ENCODE measurements at regions of chr9 and their contacts with region 1.

Region 1: GRCh38 chr9:116646661-116647512 is 40.2 kb upstream of the TRIM32 start:
- DNase-seq: peak; percentile 81
- H3K4me3 ChIP-seq: no peak overlapping the region
- H3K27ac ChIP-seq: no peak overlapping the region
- H3K4me1 ChIP-seq: peaks cover 8% of the 10 kb centered on the region
- H3K27me3 ChIP-seq: no peaks in the 10 kb centered on the region
- CTCF ChIP-seq: peak; percentile 83

Region 2: DNA sequence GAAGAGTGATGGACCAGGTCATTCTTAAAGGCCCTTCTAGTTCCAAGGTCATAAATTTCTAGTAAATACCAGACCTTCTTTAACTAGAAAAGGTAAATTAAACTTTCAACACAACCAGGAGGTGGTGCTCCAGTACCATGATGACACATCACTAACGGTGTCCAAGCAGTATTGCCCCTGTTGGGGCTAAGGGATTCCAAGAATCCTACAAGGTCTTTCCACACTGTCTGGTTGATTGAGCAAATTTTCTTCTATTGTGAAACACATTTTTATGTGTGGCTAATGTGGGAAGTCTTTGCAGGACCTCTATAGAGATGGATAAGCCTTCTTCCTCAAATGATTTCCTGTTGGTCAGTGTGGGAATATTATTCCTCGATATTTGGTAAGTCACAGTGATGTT is 952.9 kb before region 1 on chr9:
- CTCF ChIA-PET with region 1: no interaction called
- POLR2A ChIA-PET with region 1: no interaction called
- intact Hi-C with region 1: loop called (anchors 2 kb)
- DNase-seq: peak; percentile 89
- H3K4me3 ChIP-seq: no peak overlapping the region
- H3K27ac ChIP-seq: peak overlapping the region; percentile 54
- H3K4me1 ChIP-seq: peaks cover 24% of the 10 kb centered on the region
- H3K27me3 ChIP-seq: no peaks in the 10 kb centered on the region
- CTCF ChIP-seq: peak; percentile 57

Region 3: DNA sequence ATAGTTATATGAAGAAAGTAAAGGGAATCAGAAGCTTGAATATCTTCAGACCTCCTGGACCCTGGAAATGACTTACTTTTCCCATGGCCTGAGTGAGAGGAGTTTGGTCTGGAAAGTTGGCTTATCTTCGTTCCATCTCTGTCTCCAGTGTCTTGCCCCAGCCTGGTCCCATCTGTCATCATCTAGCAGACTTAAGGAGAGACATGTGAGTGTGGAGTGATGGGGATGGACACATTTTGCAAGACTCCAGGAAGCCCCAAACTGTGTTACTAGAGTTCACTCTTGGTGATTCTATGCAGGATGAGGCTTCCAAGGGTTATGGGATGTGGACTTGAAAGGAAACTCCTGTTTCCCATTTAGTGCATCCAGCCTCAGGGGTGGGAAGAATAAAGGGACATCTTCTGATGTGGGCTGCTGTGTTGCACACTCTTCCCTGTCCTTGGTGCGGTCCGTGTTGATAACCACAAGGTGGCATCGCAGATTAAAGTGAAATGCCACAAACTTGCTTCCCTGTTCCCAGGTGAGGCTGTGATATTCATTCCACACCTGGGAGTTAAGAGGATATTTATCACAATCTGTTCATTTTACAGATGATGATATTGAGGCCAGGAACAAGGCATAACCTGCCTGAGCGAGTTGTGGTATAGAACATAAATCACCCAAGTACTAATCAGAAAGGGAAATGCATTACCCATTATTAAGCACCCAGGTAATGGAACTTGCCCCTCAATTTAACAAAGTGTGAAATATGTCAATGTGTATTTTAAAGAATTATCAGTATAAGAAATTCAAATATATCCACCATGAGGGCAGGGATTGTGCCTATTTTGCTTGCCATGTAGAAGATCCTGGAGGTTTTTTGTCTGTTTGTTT is 763.2 kb before region 1 on chr9:
- CTCF ChIA-PET with region 1: no interaction called
- POLR2A ChIA-PET with region 1: no interaction called
- intact Hi-C with region 1: loop called (anchors 5 kb)
- DNase-seq: peak; percentile 69
- H3K4me3 ChIP-seq: no peak overlapping the region
- H3K27ac ChIP-seq: peak overlapping the region; percentile 52
- H3K4me1 ChIP-seq: peaks cover 81% of the 10 kb centered on the region
- H3K27me3 ChIP-seq: no peaks in the 10 kb centered on the region
- CTCF ChIP-seq: peak; percentile 87

Region 4: GRCh38 chr9:116464987-116465571 is 181.8 kb before region 1 on chr9:
- CTCF ChIA-PET with region 1: no interaction called
- POLR2A ChIA-PET with region 1: no interaction called
- intact Hi-C with region 1: no loop called
- DNase-seq: no peak
- H3K4me3 ChIP-seq: no peak overlapping the region
- H3K27ac ChIP-seq: no peak overlapping the region
- H3K4me1 ChIP-seq: peaks cover 15% of the 10 kb centered on the region
- H3K27me3 ChIP-seq: no peaks in the 10 kb centered on the region
- CTCF ChIP-seq: no peak

Region 5: GRCh38 chr9:116482740-116483139 is 164.1 kb before region 1 on chr9:
- CTCF ChIA-PET with region 1: no interaction called
- POLR2A ChIA-PET with region 1: no interaction called
- intact Hi-C with region 1: no loop called
- DNase-seq: no peak
- H3K4me3 ChIP-seq: no peak overlapping the region
- H3K27ac ChIP-seq: no peak overlapping the region
- H3K4me1 ChIP-seq: peaks cover 5% of the 10 kb centered on the region
- H3K27me3 ChIP-seq: no peaks in the 10 kb centered on the region
- CTCF ChIP-seq: no peak

Region 6: DNA sequence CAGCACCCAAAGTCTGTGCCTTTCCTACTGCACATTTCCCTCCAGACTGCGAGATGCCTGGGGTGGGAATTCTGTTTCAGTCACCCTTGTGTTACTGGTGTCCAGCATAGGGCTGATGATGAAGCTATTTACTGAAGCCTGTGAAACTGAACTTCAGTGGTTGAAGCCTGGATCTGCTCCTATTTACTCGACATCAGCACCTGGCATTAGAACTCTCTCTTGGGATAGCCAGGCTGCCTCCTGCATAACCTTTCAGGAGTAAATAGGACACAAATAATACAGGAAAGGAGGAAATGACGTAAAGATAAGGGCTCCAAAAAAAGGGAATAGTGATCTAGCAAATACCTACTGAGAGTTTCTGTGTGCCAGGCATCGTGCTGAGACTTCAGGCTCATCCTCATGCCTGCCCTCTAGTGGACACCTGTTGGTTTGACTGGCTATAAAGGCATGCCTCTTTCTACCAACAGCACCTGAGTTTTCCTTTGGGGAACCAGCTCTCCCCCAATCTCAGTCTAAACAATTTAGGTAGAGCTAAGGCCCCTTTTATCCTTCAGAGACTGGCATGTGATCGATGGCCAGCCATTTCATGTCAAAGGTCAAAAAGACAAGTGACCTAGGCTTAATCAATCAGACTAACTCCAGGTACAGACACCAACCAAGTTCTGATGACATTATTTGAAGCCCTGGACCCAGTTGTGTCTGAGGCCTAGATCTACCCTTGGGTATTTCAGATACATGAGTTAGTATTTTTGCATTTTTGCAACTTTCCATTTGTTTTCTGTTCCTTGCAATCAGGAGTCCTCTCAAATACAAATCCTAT is 151.9 kb before region 1 on chr9:
- CTCF ChIA-PET with region 1: no interaction called
- POLR2A ChIA-PET with region 1: no interaction called
- intact Hi-C with region 1: loop called (anchors 5 kb)
- DNase-seq: peak; percentile 44
- H3K4me3 ChIP-seq: no peak overlapping the region
- H3K27ac ChIP-seq: no peak overlapping the region
- H3K4me1 ChIP-seq: peaks cover 6% of the 10 kb centered on the region
- H3K27me3 ChIP-seq: no peaks in the 10 kb centered on the region
- CTCF ChIP-seq: peak; percentile 78

Region 7: GRCh38 chr9:116572095-116572748 is 74.7 kb before region 1 on chr9:
- CTCF ChIA-PET with region 1: no interaction called
- POLR2A ChIA-PET with region 1: no interaction called
- intact Hi-C with region 1: loop called (anchors 5 kb)
- DNase-seq: peak; percentile 82
- H3K4me3 ChIP-seq: no peak overlapping the region
- H3K27ac ChIP-seq: peak overlapping the region; percentile 58
- H3K4me1 ChIP-seq: peaks cover 21% of the 10 kb centered on the region
- H3K27me3 ChIP-seq: no peaks in the 10 kb centered on the region
- CTCF ChIP-seq: peak; percentile 99

Region 8: GRCh38 chr9:116589392-116590354 is 57.2 kb before region 1 on chr9:
- CTCF ChIA-PET with region 1: no interaction called
- POLR2A ChIA-PET with region 1: no interaction called
- intact Hi-C with region 1: loop called (anchors 2 kb)
- DNase-seq: peak; percentile 85
- H3K4me3 ChIP-seq: no peak overlapping the region
- H3K27ac ChIP-seq: no peak overlapping the region
- H3K4me1 ChIP-seq: no peaks in the 10 kb centered on the region
- H3K27me3 ChIP-seq: no peaks in the 10 kb centered on the region
- CTCF ChIP-seq: peak; percentile 85

Region 9: GRCh38 chr9:116767219-116767618 is 120.3 kb after region 1 on chr9:
- CTCF ChIA-PET with region 1: no interaction called
- POLR2A ChIA-PET with region 1: no interaction called
- intact Hi-C with region 1: no loop called
- DNase-seq: peak; percentile 41
- H3K4me3 ChIP-seq: no peak overlapping the region
- H3K27ac ChIP-seq: no peak overlapping the region
- H3K4me1 ChIP-seq: no peaks in the 10 kb centered on the region
- H3K27me3 ChIP-seq: no peaks in the 10 kb centered on the region
- CTCF ChIP-seq: no peak

Measured in A673 (cell line).